ENCODE measurements at regions of chr1 and their contacts with region 1.

Region 1: GRCh38 chr1:88877382-88877825 is 14.0 kb downstream of the GTF2B start:
- DNase-seq: no peak
- H3K4me3 Mint-ChIP-seq: no peak overlapping the region
- H3K27ac Mint-ChIP-seq: no peak overlapping the region
- H3K4me1 Mint-ChIP-seq: peaks cover 20% of the 10 kb centered on the region
- H3K27me3 Mint-ChIP-seq: no peaks in the 10 kb centered on the region

Region 2: DNA sequence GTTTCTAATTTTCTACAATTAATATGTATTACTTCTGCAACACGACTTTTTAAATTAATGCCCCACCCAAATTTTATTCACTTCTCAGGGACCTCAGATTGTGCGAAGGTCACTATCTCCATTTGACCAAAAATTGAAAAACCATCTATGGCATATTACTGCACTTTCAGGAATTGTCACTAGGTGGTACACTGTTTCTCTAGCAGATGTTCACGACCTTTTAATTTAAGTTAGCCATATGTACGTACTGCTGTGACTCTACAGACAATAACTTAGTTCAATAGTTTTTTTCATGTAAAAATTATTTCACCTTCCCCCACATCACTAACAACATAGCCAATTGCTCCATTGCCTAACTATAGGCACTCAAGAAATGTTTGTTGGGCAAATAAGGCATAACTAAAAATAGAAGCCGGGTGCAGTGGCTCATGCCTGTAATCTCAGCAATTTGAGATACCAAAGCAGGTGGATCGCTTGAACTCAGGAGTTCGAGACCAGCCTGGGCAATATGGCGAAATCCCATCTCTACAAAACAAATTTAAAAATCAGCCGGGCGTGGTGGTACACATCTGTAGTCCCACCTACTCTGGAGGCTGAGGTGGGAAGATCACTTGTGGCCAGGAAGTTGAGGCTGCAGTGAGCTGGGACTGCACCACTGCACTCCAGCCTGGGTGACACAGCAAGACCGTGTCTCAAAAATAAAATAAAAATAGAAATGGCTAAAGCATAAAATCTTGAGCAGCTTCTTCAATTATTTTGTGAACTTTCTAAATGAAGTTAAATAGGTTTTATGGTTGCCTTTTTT is 269.1 kb before region 1 on chr1:
- intact Hi-C with region 1: loop called (anchors 5 kb)
- DNase-seq: no peak
- H3K4me3 Mint-ChIP-seq: no peak overlapping the region
- H3K27ac Mint-ChIP-seq: no peak overlapping the region
- H3K4me1 Mint-ChIP-seq: no peaks in the 10 kb centered on the region
- H3K27me3 Mint-ChIP-seq: peaks cover 3% of the 10 kb centered on the region

Region 3: DNA sequence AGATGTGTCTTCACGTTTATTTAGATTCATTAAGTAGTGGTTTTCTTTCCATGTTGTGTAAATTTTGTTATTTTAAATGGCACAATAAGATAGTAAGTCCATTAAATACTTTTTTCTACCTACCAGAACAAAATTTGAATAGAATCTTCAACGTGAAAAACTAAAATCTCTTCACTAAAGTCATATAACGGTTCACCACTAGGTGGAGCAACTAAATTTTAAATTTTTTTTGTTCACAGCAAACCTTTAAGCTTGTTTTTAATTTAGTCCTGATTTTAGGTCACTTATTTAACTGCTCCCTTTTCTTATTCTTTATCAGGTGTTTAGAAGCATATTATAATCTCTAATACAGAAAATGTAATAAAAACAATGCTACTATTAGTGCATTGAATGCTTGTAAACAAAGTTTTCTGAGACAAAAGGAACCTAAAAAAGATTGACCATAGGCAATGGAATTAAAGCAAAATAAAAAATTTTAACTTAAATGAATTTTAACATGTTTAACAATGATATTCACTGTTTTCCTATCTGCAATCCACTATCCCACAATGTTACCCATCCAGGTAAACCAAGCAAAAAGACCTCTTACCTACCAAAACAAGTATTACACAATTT is 221.6 kb before region 1 on chr1:
- intact Hi-C with region 1: loop called (anchors 2 kb)
- DNase-seq: no peak
- H3K4me3 Mint-ChIP-seq: no peak overlapping the region
- H3K27ac Mint-ChIP-seq: no peak overlapping the region
- H3K4me1 Mint-ChIP-seq: peaks cover 8% of the 10 kb centered on the region
- H3K27me3 Mint-ChIP-seq: peaks cover under 1% of the 10 kb centered on the region

Region 4: GRCh38 chr1:88736639-88737248 is 140.7 kb before region 1 on chr1:
- intact Hi-C with region 1: loop called (anchors 1 kb)
- DNase-seq: peak; percentile 79
- H3K4me3 Mint-ChIP-seq: no peak overlapping the region
- H3K27ac Mint-ChIP-seq: no peak overlapping the region
- H3K4me1 Mint-ChIP-seq: peaks cover 16% of the 10 kb centered on the region
- H3K27me3 Mint-ChIP-seq: no peaks in the 10 kb centered on the region

Region 5: DNA sequence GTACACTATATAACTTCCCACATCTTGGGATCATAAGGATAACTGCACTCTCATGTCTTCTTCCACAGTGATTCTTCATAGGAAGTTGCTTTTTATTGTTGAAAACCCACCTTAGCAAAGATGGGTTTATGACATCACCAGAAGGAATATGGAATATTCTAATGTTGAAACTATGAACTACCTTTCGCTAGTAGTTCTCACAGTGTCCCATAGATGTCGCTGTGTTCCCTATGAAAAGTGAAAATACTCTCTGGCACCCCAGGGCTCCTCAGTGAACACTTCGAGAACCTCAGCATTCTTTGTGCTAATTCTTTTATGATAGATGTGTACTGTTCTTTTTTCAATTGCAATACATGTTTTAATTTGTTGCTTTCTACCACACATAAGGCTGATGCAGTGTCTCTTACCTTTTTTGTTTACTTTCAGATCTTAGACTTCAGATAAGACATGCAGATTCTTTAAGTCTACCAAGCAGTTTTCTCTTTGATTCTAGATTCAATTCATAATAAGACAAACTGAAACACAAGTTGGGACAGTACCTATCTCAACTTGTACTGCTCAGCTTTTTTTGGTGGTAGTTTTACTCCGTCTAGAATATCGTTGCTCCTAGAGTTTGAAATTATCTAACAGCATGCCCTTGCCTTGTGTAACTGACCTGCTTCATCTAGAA is 76.9 kb before region 1 on chr1:
- intact Hi-C with region 1: loop called (anchors 1 kb)
- DNase-seq: peak; percentile 81
- H3K4me3 Mint-ChIP-seq: no peak overlapping the region
- H3K27ac Mint-ChIP-seq: peak overlapping the region; percentile 61
- H3K4me1 Mint-ChIP-seq: peaks cover 7% of the 10 kb centered on the region
- H3K27me3 Mint-ChIP-seq: no peaks in the 10 kb centered on the region

Region 6: DNA sequence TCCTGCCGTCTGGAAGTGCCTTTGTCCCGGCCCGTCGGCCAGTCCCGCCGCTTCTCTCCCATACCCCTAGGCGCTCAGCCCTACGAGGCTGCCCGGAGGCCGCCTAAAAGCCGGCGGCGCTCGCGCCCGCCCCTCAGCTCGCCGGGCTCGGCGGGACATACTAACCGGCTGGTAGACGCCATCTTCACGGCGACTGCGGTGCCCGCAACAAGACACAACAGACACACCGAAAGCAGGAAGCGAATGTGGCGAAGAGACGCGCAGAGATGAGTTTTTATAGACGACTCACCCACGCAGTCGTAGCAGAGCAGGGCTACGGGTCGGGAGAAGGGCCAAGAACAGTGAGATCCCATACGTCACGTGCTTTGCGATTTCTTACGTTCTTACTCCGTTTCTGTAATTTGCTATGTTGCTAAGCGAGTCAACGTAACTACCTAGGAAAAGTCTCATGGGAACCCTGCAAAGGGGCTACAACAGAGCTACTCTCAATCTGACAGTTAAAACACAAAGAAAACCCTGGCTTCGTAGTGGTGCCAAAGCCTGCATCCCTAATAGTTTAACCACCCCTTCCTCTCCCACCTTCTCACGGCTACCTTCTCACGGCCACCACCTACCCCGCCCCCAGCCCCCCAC is 14.0 kb after region 1 on chr1 and contains the start of gene GTF2B:
- intact Hi-C with region 1: loop called (anchors 2 kb)
- DNase-seq: peak; percentile 98
- H3K4me3 Mint-ChIP-seq: peak within 1 kb of the TSS; percentile 91
- H3K27ac Mint-ChIP-seq: peak within 1 kb of the TSS; percentile 98
- H3K4me1 Mint-ChIP-seq: peaks cover 37% of the 10 kb centered on the region
- H3K27me3 Mint-ChIP-seq: peaks cover 6% of the 10 kb centered on the region
- total RNA-seq, gene GTF2B: 41.2 and 42.2 TPM in 2 replicates

Region 7: DNA sequence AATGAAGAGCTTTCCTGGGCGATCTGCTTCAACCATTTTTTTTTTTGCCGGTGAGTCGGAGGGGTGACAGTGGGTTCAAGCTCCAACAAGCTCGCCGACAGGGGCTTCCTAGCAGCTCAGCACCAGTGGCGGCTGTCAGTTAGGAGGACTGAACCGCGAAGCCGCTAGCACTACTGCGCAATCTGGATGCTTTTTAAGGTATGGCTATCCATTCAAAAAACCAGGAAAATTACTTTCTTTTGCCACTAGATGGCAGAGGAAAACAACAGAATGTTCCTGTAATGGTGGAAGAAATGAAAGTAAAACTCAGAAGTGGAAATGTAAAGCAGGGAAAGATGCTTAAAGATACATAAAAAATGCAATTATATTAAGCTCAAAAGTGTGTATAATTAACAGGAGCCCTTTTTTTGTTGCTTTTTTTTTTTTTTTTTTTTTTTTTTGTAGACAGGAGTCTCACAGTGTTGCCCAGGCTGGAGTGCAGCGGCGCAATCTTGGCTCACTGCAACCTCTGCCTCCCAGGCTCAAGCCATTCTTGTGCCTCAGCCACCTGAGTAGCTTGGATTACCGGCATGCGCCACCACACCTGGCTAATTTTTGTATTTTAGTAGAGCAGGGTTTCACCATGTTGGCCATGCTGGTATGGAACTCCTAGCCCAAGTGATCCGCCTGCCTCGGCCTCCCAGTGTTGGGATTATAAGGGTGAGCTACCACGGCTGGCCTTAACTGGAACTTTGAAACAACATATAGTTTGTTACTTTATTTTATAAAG is 106.6 kb after region 1 on chr1:
- intact Hi-C with region 1: no loop called
- DNase-seq: peak; percentile 79
- H3K4me3 Mint-ChIP-seq: peak overlapping the region; percentile 54
- H3K27ac Mint-ChIP-seq: peak overlapping the region; percentile 90
- H3K4me1 Mint-ChIP-seq: peaks cover 77% of the 10 kb centered on the region
- H3K27me3 Mint-ChIP-seq: no peaks in the 10 kb centered on the region

Measured in activated CD4-positive, alpha-beta T cell treated with anti-CD3 and anti-CD28 coated beads, Interleukin-2, amount 10 ng/mL, durations not matched to agents 24 days and 14 days (primary cell).